Calu3 (cell line): ENCODE measurements at regions of chr3 and their contacts with region 1.

Region 1: GRCh38 chr3:63068012-63068645 is 192.9 kb upstream of the CADPS start:
- DNase-seq: peak; percentile 52
- H3K4me3 Mint-ChIP-seq: no peak overlapping the region
- H3K27ac Mint-ChIP-seq: no peak overlapping the region
- H3K4me1 Mint-ChIP-seq: peaks cover 23% of the 10 kb centered on the region
- H3K27me3 Mint-ChIP-seq: no peaks in the 10 kb centered on the region
- CTCF ChIP-seq: no peak

Region 2: GRCh38 chr3:62665598-62666437 is 402.3 kb before region 1 on chr3:
- CTCF ChIA-PET with region 1: no interaction called
- intact Hi-C with region 1: loop called (anchors 10 kb)
- DNase-seq: peak; percentile 75
- H3K4me3 Mint-ChIP-seq: no peak overlapping the region
- H3K27ac Mint-ChIP-seq: no peak overlapping the region
- H3K4me1 Mint-ChIP-seq: no peaks in the 10 kb centered on the region
- H3K27me3 Mint-ChIP-seq: peaks cover 70% of the 10 kb centered on the region
- CTCF ChIP-seq: peak; percentile 59

Region 3: DNA sequence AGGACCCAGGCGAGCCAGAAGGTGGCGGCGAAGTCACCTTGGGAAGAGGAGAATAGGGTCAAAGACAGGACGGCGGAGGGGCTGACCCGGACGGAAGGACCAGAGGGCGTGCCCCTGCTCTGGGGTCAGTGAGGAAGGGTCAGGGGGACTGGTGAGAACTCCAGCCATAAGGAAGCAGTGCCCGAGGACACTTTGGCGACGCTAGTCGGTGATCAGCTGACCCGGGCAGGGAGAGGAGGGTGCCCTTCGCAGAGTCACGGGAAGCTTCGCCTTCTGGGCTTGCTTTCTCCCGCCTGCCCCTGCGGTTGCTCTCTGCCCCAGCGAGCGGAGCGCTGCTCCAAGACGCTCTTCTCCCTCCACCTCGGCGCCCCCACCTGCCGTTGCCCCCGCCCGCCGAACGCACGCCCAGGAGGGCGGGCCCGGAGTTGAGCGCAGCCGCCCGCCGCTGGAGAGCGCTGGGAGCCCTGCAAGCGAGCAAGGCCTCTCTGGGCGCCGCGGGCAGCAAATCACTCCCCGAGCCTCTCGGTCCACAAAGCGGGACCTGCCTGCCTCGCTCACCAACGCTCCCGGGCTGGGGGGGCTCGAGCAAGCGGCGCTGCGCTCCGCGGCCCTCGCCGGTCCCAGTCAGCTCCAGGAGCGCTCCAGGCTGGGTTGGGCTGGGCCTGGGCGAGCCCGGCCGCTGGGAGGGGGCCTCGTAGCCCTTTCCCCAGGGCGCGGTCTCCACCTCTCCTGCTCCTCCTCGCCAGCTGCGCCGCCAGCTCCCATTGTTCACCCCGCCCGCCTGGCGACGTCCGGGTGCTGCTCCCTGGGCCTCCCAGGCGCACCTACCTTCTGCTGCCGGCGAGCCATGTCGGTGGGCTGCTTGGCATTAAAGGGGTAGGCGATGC is 194.1 kb before region 1 on chr3:
- CTCF ChIA-PET with region 1: interaction called, 7 read pairs
- intact Hi-C with region 1: loop called (anchors 5 kb)
- DNase-seq: peak; percentile 55
- H3K4me3 Mint-ChIP-seq: peak overlapping the region; percentile 88
- H3K27ac Mint-ChIP-seq: no peak overlapping the region
- H3K4me1 Mint-ChIP-seq: peaks cover 8% of the 10 kb centered on the region
- H3K27me3 Mint-ChIP-seq: peaks cover 62% of the 10 kb centered on the region
- CTCF ChIP-seq: no peak

Region 4: GRCh38 chr3:62990704-62991413 is 77.3 kb before region 1 on chr3:
- CTCF ChIA-PET with region 1: no interaction called
- intact Hi-C with region 1: loop called (anchors 5 kb)
- DNase-seq: no peak
- H3K4me3 Mint-ChIP-seq: no peak overlapping the region
- H3K27ac Mint-ChIP-seq: no peak overlapping the region
- H3K4me1 Mint-ChIP-seq: no peaks in the 10 kb centered on the region
- H3K27me3 Mint-ChIP-seq: peaks cover 28% of the 10 kb centered on the region
- CTCF ChIP-seq: no peak

Region 5: DNA sequence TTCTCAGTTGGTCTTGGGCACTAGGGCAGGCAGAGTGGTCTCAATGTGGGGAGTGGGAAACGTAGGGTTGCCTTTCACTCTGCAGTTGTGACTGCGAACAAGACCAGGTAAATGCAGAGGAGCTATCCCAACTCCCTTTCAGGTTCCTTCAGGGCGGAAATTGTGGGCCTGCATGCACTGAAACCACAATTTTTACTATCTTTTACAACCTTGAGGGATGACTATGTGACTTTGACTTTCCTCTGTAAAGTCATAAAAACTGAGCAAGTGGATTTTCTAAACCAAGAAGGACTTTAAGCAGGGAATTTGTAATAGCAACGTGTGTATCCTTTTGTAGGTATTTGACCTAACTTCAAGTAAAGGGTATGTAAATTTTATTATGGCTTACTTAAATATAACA is 21.5 kb before region 1 on chr3:
- CTCF ChIA-PET with region 1: interaction called, 5 read pairs
- intact Hi-C with region 1: loop called (anchors 1 kb)
- DNase-seq: no peak
- H3K4me3 Mint-ChIP-seq: no peak overlapping the region
- H3K27ac Mint-ChIP-seq: peak overlapping the region; percentile 77
- H3K4me1 Mint-ChIP-seq: peaks cover 50% of the 10 kb centered on the region
- H3K27me3 Mint-ChIP-seq: no peaks in the 10 kb centered on the region
- CTCF ChIP-seq: no peak

Region 6: DNA sequence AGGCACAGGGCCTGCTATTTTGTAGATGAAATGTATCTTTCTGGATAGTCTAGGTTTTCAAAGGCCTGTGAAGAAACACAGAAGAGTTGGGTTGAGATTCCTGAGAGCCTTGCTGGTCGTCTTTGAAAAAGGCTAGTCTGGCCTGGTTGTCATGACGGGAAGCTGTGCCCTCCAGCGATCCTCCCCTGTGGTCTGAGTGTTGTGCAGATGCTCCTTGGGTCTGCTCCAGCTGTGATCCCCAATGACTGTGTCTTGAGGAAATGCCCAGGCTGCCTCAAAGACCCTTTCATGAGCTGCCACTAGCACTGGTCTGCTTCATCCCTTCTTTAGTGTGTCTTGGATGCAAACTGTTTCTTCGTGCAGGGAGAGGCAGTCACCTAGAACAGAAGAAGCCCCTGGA is 99.0 kb after region 1 on chr3:
- CTCF ChIA-PET with region 1: no interaction called
- intact Hi-C with region 1: no loop called
- DNase-seq: no peak
- H3K4me3 Mint-ChIP-seq: no peak overlapping the region
- H3K27ac Mint-ChIP-seq: no peak overlapping the region
- H3K4me1 Mint-ChIP-seq: no peaks in the 10 kb centered on the region
- H3K27me3 Mint-ChIP-seq: no peaks in the 10 kb centered on the region
- CTCF ChIP-seq: no peak

Region 7: DNA sequence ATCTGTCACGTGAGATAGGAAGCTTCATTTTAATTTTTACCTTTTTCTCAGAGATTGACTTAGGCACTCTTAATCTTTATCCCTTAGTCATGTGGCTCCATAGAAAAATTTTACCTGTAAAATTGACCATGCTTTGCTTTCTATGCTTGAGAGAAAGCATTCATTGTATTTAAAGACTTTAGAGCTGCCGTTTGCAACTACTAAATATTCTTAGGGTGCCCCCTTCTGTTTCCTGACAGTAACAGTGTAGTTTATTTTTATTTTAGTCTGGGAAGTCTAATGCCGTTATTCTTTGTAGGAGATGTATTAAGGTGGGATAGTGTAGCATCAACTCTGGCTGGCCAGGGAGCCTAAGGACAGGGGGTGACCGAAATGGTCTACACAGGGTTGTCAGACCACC is 125.5 kb after region 1 on chr3:
- CTCF ChIA-PET with region 1: interaction called, 3 read pairs
- intact Hi-C with region 1: loop called (anchors 5 kb)
- DNase-seq: peak; percentile 14
- H3K4me3 Mint-ChIP-seq: no peak overlapping the region
- H3K27ac Mint-ChIP-seq: no peak overlapping the region
- H3K4me1 Mint-ChIP-seq: peaks cover 25% of the 10 kb centered on the region
- H3K27me3 Mint-ChIP-seq: no peaks in the 10 kb centered on the region
- CTCF ChIP-seq: peak; percentile 16